A549 (cell line): ENCODE measurements at regions of chr10 and their contacts with region 1.

Region 1: DNA sequence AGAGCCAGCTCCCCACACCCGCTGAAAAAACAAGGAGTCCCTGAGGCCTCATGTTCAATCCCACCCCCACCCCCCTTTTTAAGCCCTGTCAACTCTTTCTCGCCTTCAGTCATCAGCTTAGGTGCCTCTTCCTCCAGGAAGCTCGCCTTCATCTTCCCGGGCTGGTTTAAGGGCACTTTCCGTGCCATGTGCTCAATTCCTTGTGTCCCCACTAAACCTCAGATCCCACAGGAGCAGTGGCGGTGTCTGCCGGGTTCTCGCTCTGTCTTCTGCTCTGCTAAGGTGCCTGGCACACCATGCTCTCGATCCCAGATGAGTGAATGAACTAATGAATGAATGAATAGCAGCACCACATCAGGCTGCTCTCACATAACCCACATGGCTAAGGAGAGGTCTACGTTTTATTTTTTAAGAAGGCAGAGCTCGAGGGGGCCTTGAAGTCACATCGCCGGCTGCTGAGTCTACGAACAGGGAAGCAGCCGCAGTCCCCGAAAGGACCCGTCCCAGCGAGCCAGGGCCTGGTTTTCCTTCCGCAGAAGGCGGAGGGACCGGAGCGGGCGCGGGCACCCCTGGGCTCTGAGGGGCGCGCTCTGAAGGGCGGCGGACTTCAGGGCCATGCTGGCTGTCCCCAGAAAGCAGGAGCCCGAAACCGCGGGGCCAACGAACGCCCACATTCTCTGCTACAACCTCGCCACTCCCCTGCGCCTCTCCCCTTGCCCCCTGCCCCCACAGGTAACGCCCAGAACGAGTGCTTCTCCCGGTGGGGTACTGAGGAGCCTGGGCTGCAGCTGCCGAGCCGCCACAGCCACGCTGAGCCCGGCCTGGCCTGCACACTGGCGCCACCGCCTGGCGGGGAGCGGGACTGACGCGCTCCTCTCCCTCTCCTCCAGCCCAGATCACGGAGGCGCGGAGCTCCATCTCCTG is 73.4 kb upstream of the KCNMA1 start:
- DNase-seq: peak; percentile 48 to 62
- ATAC-seq: peak; percentile 95 to 99
- H3K4me3 ChIP-seq: peak overlapping the region; percentile 31; the same call in 2 of the 3 replicates
- H3K27ac ChIP-seq: peak overlapping the region; percentile 40 to 79; a peak in 5 of 6 replicates
- H3K4me1 ChIP-seq: no peaks in the 10 kb centered on the region
- CTCF ChIP-seq: peak; percentile 86
- EP300 ChIP-seq: no peak
- POLR2A ChIP-seq: no peak
- RAD21 ChIP-seq: peak; percentile 82 to 84

Region 2: GRCh38 chr10:77251297-77252013 is 459.6 kb before region 1 on chr10:
- CTCF ChIA-PET with region 1: interaction called, 21 read pairs
- POLR2A ChIA-PET with region 1: no interaction called
- DNase-seq: peak; percentile 63 to 64
- ATAC-seq: peak; percentile 91 to 95
- H3K4me3 ChIP-seq: no peak overlapping the region
- H3K27ac ChIP-seq: peak overlapping the region; percentile 18 to 51; a peak in 3 of 6 replicates
- H3K4me1 ChIP-seq: peaks cover 22% of the 10 kb centered on the region
- CTCF ChIP-seq: peak; percentile 83
- EP300 ChIP-seq: no peak
- POLR2A ChIP-seq: no peak
- RAD21 ChIP-seq: peak; percentile 92 to 94

Region 3: DNA sequence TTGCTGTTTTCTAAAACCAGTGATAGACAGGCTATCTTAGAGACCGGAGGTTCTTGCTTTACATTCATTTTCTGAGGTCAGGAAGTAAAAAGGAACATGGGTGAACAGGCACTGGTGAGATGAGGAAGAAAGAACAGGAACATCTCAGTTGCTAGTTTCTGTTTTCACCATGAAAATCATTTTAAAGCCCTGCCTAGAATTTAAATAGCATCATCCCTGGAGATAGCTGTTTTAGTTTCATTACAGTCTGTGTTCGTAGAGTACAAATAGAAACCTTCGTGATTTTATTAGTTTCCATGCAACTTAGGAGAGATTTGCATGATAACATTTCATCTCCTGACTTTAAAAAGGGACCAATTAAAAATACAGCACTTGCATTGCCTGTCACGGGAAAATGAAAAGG is 88.1 kb before region 1 on chr10:
- CTCF ChIA-PET with region 1: no interaction called
- POLR2A ChIA-PET with region 1: no interaction called
- DNase-seq: no peak
- ATAC-seq: no peak
- H3K4me3 ChIP-seq: no peak overlapping the region
- H3K27ac ChIP-seq: no peak overlapping the region
- H3K4me1 ChIP-seq: no peaks in the 10 kb centered on the region
- CTCF ChIP-seq: no peak
- EP300 ChIP-seq: no peak
- POLR2A ChIP-seq: no peak
- RAD21 ChIP-seq: no peak

Region 4: GRCh38 chr10:77667426-77668324 is 43.3 kb before region 1 on chr10:
- CTCF ChIA-PET with region 1: interaction called, 16 read pairs
- POLR2A ChIA-PET with region 1: no interaction called
- DNase-seq: no peak
- ATAC-seq: no peak
- H3K4me3 ChIP-seq: no peak overlapping the region
- H3K27ac ChIP-seq: no peak overlapping the region
- H3K4me1 ChIP-seq: no peaks in the 10 kb centered on the region
- CTCF ChIP-seq: no peak
- EP300 ChIP-seq: no peak
- POLR2A ChIP-seq: no peak
- RAD21 ChIP-seq: no peak

Region 5: GRCh38 chr10:77685432-77685831 is 25.6 kb before region 1 on chr10:
- CTCF ChIA-PET with region 1: interaction called, 21 read pairs
- POLR2A ChIA-PET with region 1: no interaction called
- DNase-seq: no peak
- ATAC-seq: no peak
- H3K4me3 ChIP-seq: no peak overlapping the region
- H3K27ac ChIP-seq: no peak overlapping the region
- H3K4me1 ChIP-seq: peaks cover 10% of the 10 kb centered on the region; the same call in 1 of the 3 replicates
- CTCF ChIP-seq: no peak
- EP300 ChIP-seq: no peak
- POLR2A ChIP-seq: no peak
- RAD21 ChIP-seq: no peak

Region 6: GRCh38 chr10:77692782-77693181 is 18.2 kb before region 1 on chr10:
- CTCF ChIA-PET with region 1: interaction called, 56 read pairs
- POLR2A ChIA-PET with region 1: no interaction called
- DNase-seq: no peak
- ATAC-seq: 0 out of 6 replicates have a peak, but pooled peaks of 1 of the 2 experiments have one; percentile 19
- H3K4me3 ChIP-seq: no peak overlapping the region
- H3K27ac ChIP-seq: no peak overlapping the region
- H3K4me1 ChIP-seq: no peaks in the 10 kb centered on the region
- CTCF ChIP-seq: no peak
- EP300 ChIP-seq: no peak
- POLR2A ChIP-seq: no peak
- RAD21 ChIP-seq: no peak

Region 7: DNA sequence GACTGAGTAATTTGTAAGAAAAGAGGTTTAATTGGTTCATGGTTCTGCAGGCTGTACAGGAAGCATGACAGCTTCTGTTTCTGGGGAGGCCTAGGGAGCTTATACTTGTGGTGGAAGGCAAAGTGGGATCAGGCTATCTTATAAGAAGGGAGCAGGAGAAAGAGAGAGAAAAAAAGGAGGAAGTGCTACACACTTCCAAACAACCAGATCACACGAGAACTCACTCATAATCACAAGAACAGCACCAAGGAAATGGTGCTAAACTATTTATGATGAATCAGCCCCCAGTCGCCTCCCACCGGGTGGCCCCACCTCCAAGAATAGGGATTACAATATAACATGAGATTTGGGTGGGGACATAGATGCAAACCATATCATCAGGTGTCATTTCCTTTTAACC is 15.7 kb after region 1 on chr10:
- CTCF ChIA-PET with region 1: interaction called, 48 read pairs
- POLR2A ChIA-PET with region 1: interaction called, 3 read pairs
- DNase-seq: no peak
- ATAC-seq: no peak
- H3K4me3 ChIP-seq: no peak overlapping the region
- H3K27ac ChIP-seq: no peak overlapping the region
- H3K4me1 ChIP-seq: 0 out of 3 replicates have a peak, but pooled peaks cover 4% of the 10 kb centered on the region
- CTCF ChIP-seq: no peak
- EP300 ChIP-seq: no peak
- POLR2A ChIP-seq: no peak
- RAD21 ChIP-seq: no peak